ENCODE measurements at regions of chr17 and their contacts with region 1.

Region 1: GRCh38 chr17:75877752-75878173 is 618 bp downstream of the TRIM47 start:
- DNase-seq: peak; percentile 91

Region 2: GRCh38 chr17:75625813-75626486 is 251.8 kb before region 1 on chr17:
- intact Hi-C with region 1: no loop called
- DNase-seq: no peak

Region 3: DNA sequence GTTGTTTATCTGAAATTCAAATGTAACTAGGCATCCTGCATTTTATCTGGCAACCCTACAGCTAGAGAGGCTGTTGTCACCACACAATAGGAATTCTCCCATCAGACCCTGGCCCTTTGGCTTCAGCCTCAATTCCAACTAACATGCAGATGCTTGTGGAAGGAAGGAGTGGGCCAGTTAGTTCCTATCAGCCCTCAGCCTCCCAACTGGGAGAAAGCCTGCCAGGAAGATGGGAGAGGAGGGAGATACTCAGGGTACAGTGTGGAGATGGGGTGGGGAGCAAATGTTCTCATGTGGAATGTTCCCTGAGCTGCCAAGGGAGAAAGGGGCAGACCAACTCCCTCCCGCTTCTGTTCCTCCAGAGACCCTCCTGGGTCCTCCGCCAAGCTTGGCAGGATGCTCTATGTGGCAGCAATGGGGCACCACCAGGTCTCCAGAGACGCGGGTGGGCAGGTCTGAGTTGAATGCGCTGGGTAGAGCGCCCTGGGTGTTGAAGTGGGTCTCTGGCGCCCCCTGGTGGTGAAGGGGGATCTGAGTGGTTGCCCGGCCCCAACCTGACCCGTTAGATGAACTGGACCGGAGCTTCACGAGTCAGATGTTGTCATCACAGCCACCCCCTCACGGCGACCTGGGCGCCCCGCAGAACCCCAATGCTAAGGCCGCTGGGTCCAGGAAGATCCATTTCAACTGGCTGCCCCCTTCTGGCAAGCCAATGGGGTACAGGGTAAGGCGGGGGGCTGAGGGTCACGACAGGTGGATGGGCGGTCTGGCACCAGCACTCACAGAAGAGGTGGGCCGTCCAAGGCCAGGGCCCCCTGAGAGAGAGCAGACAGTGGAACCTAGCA is 128.0 kb before region 1 on chr17:
- intact Hi-C with region 1: no loop called
- DNase-seq: peak; percentile 96

Region 4: DNA sequence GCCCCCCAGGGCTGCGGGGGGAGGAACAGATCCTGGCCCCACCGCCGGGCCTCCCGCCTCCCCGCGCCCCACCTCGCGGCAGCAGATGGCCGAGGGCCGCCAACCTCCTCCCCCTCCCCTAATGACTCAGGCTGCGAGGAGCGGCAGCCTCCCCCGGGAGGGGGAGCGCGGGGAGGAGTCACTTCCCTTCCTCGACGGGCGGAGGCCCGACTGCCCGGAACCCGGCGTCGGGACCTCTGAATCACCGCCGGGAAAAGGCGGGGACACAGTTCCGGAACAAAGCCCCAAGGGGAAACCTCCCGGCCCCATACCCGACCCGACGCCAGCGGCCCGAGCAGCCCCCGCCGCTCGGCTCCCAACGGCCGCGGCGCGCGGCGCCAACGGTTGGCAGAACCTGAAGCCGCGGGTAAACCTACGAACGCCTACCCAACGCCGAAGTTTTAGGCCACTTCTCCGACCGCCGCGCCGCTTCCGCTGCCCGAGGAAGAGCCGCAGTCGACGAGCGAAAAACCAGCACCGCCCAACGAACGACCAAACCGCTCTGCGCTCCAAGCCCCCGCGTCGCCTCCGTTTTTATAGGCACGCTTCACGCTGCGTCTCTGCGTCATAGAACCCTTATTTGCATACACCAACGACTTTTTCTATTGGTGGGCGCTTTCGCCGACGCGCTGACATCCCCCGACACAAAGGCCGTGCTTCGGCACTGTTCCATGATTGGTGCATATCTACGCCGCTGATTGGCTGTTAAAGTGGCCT is 98.4 kb before region 1 on chr17:
- intact Hi-C with region 1: loop called in 1 of 2 experiments (anchors 5 kb)
- DNase-seq: peak; percentile 99

Region 5: GRCh38 chr17:75845049-75845860 is 32.5 kb before region 1 on chr17:
- intact Hi-C with region 1: loop called in 1 of 2 experiments (anchors 5 kb)
- DNase-seq: peak; percentile 95

Region 6: DNA sequence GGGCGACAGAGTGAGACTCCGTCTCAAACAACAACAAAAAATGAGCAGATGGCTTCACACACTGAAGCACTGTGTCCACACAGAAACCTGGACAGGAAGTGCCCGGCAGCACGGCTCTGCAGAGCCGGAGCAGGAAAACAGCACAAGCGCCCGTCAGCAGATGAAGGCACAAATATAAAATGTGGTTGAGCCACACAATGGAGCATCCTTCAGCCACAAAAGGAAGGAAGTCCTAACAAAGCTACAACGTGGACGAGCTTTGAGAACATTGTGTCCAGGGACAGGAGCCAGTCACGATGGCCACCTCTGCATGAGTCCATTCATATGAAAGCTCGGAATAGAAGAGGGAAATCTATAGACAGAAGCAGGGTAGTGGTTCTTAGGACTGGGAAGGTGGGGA is 607.8 kb after region 1 on chr17:
- intact Hi-C with region 1: loop called in 1 of 2 experiments (anchors 5 kb)
- DNase-seq: peak; percentile 81

Region 7: GRCh38 chr17:76940738-76941350 is 1063.1 kb after region 1 on chr17:
- intact Hi-C with region 1: no loop called
- DNase-seq: no peak